ENCODE measurements at regions of chr11 and their contacts with region 1.

Region 1: DNA sequence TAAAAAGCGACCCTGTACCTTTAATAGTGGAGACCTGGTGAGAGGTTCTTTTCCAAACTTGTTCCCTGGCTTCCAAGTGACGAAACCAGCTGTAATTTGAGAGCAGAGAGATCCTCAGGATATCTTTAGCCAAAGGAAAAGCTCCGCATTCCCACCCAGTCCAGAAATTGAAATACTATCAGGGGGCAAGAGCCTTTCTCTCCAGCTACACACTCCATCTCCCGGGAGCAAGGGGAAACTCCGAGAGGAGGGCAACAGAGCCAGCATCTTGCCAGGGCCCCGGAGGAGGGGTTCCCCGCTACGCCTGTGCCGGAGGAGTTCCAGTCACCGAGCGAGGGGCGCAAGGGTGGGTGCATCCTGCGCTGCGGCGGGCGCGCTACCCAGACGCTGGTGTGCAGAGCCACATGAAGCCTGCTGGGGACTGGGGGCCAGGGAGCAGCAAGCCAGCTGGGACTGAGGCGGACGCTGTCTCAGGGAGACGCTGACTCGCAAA is at the start of gene FIBIN:
- DNase-seq: peak; percentile 67 to 83
- ATAC-seq: peak; percentile 79
- H3K4me3 ChIP-seq: peak within 1 kb of the TSS; percentile 75 to 87
- H3K27ac ChIP-seq: peak within 1 kb of the TSS; percentile 59 to 74
- H3K4me1 ChIP-seq: peaks cover 0 to 8% of the 10 kb centered on the region in 2 donors
- H3K27me3 ChIP-seq: no peaks in the 10 kb centered on the region
- total RNA-seq, gene FIBIN: 80.9 to 169 TPM

Region 2: DNA sequence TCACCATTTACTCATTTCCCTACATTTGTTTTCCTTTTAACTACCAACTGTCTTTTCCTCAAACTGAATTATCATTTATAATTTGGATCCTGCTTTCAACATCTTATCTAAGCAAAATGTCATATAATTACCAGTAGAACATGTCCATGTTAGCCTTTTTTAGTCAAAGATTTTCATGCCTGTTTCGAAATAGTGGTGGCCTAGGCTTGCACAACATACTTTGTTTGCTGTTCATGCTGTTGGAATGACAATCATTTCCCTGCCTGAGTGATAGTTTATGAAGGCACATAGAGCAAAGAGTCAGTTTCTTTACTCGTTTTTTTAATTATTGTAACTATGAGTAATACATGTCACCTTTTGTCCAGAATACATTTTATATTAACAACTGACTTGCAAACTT is 806.4 kb before region 1 on chr11:
- intact Hi-C with region 1: no loop called
- DNase-seq: no peak
- ATAC-seq: peak; percentile 57
- H3K4me3 ChIP-seq: no peak overlapping the region
- H3K27ac ChIP-seq: no peak overlapping the region
- H3K4me1 ChIP-seq: no peaks in the 10 kb centered on the region
- H3K27me3 ChIP-seq: no peaks in the 10 kb centered on the region

Region 3: DNA sequence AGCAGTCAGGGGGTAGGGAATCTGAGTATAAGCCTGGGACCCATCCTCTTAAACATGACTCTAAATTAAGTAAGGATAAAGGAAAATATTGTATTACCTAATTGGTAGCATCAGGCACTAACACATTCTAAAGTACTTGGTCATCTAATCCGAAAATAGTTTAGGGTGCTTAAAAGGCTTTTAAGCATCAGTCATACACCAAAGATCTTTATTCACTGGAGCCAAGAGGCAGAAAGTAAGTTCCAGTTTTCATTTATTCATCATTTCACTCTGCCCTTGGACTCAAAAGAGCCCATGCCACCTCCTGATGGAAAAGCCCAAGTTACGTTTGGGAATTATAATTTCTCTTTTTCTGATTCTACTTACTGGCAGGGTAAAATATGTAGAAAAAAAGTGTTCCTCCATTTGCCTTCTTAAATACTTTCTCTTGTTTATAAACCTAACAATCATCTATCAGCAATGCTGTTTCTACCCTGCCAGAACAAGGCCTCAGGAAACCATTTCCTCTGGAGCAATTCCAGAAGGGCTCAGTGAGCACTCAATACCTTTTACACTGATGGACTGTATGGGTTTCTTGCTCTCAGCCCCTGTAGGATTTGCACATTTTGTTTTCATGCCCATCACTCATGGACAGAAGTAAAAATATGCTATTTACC is 152.1 kb before region 1 on chr11:
- intact Hi-C with region 1: loop called (anchors 2 to 5 kb)
- DNase-seq: no peak
- ATAC-seq: peak; percentile 72
- H3K4me3 ChIP-seq: no peak overlapping the region
- H3K27ac ChIP-seq: peak overlapping the region; percentile 94 to 97
- H3K4me1 ChIP-seq: peaks cover 8 to 10% of the 10 kb centered on the region in 2 donors
- H3K27me3 ChIP-seq: no peaks in the 10 kb centered on the region

Region 4: GRCh38 chr11:26901162-26901561 is 92.8 kb before region 1 on chr11:
- intact Hi-C with region 1: loop called in 1 of 2 experiments (anchors 5 kb)
- DNase-seq: peak in 1 of 2 donors; percentile 48
- ATAC-seq: peak; percentile 82
- H3K4me3 ChIP-seq: no peak overlapping the region
- H3K27ac ChIP-seq: peak overlapping the region in 1 of 2 donors; percentile 12
- H3K4me1 ChIP-seq: peaks cover 0 to 9% of the 10 kb centered on the region in 2 donors
- H3K27me3 ChIP-seq: no peaks in the 10 kb centered on the region

Region 5: DNA sequence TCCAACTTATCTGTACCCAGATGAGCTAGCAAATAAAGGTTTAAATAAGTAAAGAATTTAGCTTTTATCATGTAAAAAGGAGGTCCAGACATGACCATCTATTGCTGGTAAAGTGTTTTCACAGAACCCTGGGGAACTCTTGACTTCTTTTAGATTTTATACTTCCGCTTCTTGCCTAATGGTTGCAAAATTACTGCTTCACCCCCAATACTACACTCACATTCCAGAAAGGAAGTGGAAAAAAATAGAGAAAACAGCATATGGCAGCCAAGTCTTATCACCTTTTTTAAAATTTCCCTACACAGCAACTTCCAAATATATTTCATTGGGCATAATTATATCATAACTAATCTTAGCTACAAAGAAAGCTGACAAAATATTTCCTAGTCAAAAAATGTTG is 58.7 kb after region 1 on chr11:
- intact Hi-C with region 1: loop called in 1 of 2 experiments (anchors 5 kb)
- DNase-seq: no peak
- ATAC-seq: no peak
- H3K4me3 ChIP-seq: no peak overlapping the region
- H3K27ac ChIP-seq: no peak overlapping the region
- H3K4me1 ChIP-seq: peaks cover 0 to 5% of the 10 kb centered on the region in 2 donors
- H3K27me3 ChIP-seq: no peaks in the 10 kb centered on the region

Measured in aorta (tissue), 5 donors.